ENCODE measurements at regions of chr19 and their contacts with region 1.

Region 1: DNA sequence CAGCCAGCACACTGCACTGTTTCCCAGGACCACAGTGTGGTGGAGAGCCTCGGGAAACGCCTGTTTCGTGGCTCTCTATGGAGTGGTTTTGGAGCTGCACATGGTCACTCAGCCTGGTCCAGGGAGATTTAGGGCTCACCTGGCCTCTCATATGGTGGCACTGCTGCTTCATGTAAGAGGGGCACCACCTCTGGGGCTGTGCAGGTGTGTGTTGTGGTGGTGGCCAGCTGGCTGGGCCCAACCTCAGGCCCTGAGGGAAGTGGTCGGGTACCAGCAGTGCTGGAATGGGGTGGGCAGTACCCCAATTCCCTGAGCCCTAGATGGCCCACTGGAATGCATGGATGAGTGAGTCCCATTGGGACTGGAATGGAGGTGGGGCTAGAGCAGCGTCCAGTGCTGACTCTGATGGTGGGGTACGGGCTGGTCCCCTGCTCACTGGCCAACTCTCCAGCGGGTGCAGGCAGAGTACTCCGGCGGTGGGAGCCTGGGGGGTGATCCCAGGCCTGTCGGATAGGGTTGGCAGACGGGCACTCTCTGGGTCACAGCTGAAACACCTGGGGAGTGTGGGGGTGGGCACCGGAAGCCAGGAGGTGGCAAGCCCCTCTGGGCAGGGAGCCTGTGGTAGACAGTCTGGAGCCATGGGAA is 37.6 kb upstream of the DPRX start:
- DNase-seq: no peak
- H3K4me3 ChIP-seq: no peak overlapping the region
- H3K27ac ChIP-seq: no peak overlapping the region
- H3K4me1 ChIP-seq: no peaks in the 10 kb centered on the region
- H3K27me3 ChIP-seq: no peaks in the 10 kb centered on the region

Region 2: DNA sequence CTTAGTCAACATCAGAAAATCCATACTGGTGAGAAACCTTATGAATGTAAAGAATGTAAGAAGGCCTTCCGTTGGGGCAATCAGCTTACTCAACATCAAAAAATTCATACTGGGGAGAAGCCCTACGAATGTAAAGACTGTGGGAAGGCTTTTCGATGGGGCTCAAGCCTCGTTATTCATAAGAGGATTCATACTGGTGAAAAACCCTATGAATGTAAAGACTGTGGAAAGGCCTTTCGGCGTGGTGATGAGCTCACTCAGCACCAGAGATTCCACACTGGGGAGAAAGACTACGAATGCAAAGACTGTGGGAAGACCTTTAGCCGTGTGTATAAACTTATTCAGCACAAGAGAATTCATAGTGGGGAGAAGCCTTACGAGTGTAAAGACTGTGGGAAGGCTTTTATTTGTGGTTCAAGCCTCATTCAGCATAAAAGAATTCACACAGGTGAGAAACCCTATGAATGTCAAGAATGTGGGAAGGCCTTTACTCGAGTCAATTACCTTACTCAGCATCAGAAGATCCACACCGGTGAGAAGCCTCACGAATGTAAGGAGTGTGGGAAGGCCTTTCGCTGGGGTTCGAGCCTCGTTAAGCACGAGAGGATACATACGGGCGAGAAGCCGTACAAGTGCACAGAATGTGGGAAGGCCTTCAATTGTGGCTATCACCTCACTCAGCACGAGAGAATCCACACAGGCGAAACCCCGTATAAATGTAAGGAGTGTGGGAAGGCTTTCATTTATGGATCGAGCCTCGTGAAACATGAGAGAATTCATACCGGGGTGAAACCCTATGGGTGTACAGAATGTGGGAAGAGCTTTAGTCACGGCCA is 17.0 kb before region 1 on chr19:
- CTCF ChIA-PET with region 1: no interaction called
- POLR2A ChIA-PET with region 1: no interaction called
- DNase-seq: no peak
- H3K4me3 ChIP-seq: no peak overlapping the region
- H3K27ac ChIP-seq: no peak overlapping the region
- H3K4me1 ChIP-seq: no peaks in the 10 kb centered on the region
- H3K27me3 ChIP-seq: no peaks in the 10 kb centered on the region

Region 3: DNA sequence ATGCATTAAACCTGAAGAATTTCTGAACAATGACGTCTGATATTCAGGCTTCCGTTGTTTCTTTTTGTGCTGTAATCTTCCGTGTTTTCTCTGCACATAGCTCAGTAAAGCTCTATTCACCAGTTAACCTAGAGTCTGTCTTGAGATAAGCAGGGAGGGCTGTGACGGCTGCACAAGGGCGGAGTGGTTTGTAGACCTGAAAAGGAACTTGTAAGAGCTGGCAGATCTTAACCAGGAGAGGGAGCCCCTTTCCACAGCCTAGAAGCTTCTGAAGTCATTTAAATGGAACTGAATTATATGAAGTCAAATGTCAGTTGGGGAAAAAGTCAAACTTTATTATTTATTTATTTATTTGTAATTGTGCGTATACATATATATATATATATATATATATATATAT is 65.1 kb after region 1 on chr19:
- CTCF ChIA-PET with region 1: interaction called, 10 read pairs
- POLR2A ChIA-PET with region 1: no interaction called
- DNase-seq: peak; percentile 91 to 97 (median 97)
- H3K4me3 ChIP-seq: peak overlapping the region in 3 of 7 experiments; percentile 29 to 61 (median 54)
- H3K27ac ChIP-seq: peak overlapping the region in 1 of 2 experiments; percentile 56
- H3K4me1 ChIP-seq: peaks cover 0 to 5% (median 0%) of the 10 kb centered on the region in 4 experiments
- H3K27me3 ChIP-seq: no peaks in the 10 kb centered on the region

Measured in common myeloid progenitor, CD34-positive (primary cell).